OCI-LY7 (cell line): ENCODE measurements at regions of chr12 and their contacts with region 1.

Region 1: GRCh38 chr12:68951652-68952051 is 18.7 kb upstream of the CPM start:
- DNase-seq: no peak
- H3K4me3 ChIP-seq: no peak overlapping the region
- H3K27ac ChIP-seq: no peak overlapping the region
- H3K4me1 ChIP-seq: no peaks in the 10 kb centered on the region
- CTCF ChIP-seq: no peak

Region 2: GRCh38 chr12:68967046-68967445 is 15.4 kb after region 1 on chr12:
- CTCF ChIA-PET with region 1: no interaction called
- POLR2A ChIA-PET with region 1: interaction called, 7 read pairs
- intact Hi-C with region 1: loop called (anchors 2 kb)
- DNase-seq: no peak
- H3K4me3 ChIP-seq: no peak overlapping the region
- H3K27ac ChIP-seq: no peak overlapping the region
- H3K4me1 ChIP-seq: no peaks in the 10 kb centered on the region
- CTCF ChIP-seq: no peak